Activated CD4-positive, alpha-beta T cell treated with anti-CD3 and anti-CD28 coated beads for 36 hours (primary cell): ENCODE measurements at regions of chr1 and their contacts with region 1.

Region 1: DNA sequence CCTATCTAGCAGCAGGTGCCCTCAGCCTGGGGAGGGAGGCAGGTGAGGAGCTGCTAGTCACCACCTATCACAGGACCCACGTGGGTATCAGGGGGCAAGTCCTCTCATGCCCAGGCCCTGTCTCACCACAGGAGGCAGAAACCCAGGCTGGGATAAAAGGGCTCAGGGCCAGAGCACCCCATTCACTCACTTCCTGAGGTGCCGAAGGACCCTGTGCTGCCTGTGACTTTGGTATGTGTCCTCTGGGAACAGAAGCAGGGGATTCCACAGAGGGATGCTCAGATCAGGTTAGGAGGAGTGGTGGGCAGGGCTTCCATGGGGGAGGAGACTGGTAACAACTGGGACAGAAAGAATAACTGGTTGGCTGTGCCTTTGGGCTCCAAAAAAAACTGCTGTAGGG is at the start of gene LCE1E:
- DNase-seq: no peak
- ATAC-seq: no peak
- H3K4me3 Mint-ChIP-seq: no peak within 1 kb of the TSS
- H3K27ac Mint-ChIP-seq: no peak within 1 kb of the TSS
- H3K4me1 Mint-ChIP-seq: no peaks in the 10 kb centered on the region
- H3K27me3 Mint-ChIP-seq: peaks cover 22% of the 10 kb centered on the region
- total RNA-seq, gene LCE1E: not detected

Region 2: DNA sequence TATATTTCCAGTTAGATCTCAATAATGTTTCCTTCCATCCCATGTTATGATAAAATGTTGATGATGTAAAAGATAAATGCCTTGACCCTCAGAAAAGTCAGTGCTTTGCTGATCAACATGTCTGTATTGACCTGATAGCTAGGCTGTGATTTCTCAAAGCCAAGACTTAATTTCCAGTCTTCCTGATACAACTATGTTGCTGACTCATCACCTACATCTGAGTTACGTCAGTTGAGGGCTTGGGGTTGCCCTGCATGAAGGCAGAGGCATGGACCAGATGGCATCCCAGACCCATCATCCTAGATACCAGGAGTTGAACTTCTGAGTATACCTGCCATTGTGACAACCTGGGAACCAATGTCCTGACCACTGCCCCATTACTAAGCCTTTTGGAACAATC is 15.3 kb after region 1 on chr1:
- CTCF ChIA-PET with region 1: interaction called, 7 read pairs
- POLR2A ChIA-PET with region 1: no interaction called
- intact Hi-C with region 1: loop called (anchors 1 to 2 kb)
- DNase-seq: no peak
- ATAC-seq: no peak
- H3K4me3 Mint-ChIP-seq: no peak overlapping the region
- H3K27ac Mint-ChIP-seq: no peak overlapping the region
- H3K4me1 Mint-ChIP-seq: no peaks in the 10 kb centered on the region
- H3K27me3 Mint-ChIP-seq: peaks cover 23% of the 10 kb centered on the region